ENCODE measurements at regions of chr2 and their contacts with region 1.

Region 1: DNA sequence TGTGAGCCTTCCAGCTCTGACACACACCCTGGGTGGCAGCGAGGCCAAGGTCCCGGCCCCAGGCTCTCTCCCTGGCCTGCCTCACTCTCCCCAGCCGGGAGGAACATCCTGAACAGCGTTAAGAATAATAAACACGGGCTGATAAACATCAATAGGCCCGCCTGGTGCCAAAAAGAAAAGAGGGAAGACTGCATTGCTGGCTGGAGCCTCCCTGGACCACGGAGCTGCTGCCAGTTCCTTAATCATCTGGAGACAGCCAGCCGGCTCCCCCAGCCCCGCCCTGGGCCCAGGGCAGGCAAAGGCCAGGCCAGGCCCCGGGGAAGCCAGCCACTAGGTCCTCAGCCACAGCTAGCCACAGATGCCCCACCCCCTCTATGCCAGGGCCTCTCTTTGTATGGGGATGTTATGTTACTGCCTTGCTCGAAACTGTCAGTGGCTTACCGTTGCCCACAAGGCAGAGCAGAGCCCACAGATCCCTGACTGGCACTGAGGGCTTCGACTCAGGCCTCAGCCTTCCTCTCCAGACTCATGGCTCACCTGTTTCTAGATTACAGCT is 293.7 kb downstream of the DYSF start:
- DNase-seq: peak in 2 of 5 donors; percentile 47 to 70
- ATAC-seq: peak in 2 of 4 donors; percentile 25 to 41
- H3K4me3 ChIP-seq: no peak overlapping the region
- H3K27ac ChIP-seq: peak overlapping the region in 4 of 12 donors; percentile 10 to 73 (median 32)
- H3K4me1 ChIP-seq: peaks cover 0 to 42% (median 27%) of the 10 kb centered on the region in 12 donors
- H3K27me3 ChIP-seq: no peaks in the 10 kb centered on the region
- CTCF ChIP-seq: no peak
- POLR2A ChIP-seq: no peak

Region 2: GRCh38 chr2:71711133-71711855 is 35.7 kb before region 1 on chr2:
- intact Hi-C with region 1: loop called in 1 of 10 experiments (anchors 5 kb)
- DNase-seq: peak in 1 of 5 donors; percentile 31
- ATAC-seq: no peak
- H3K4me3 ChIP-seq: no peak overlapping the region
- H3K27ac ChIP-seq: no peak overlapping the region
- H3K4me1 ChIP-seq: peaks cover 0 to 47% (median 17%) of the 10 kb centered on the region in 12 donors
- H3K27me3 ChIP-seq: no peaks in the 10 kb centered on the region
- CTCF ChIP-seq: no peak
- POLR2A ChIP-seq: no peak

Region 3: GRCh38 chr2:71716781-71717624 is 30.0 kb before region 1 on chr2:
- intact Hi-C with region 1: loop called in 1 of 10 experiments (anchors 1 kb)
- DNase-seq: peak; percentile 94 to 97 (median 95)
- ATAC-seq: peak; percentile 94 to 97 (median 96)
- H3K4me3 ChIP-seq: peak overlapping the region in 1 of 12 donors; percentile 7
- H3K27ac ChIP-seq: peak overlapping the region in 10 of 12 donors; percentile 38 to 89 (median 74)
- H3K4me1 ChIP-seq: peaks cover 0 to 84% (median 44%) of the 10 kb centered on the region in 12 donors
- H3K27me3 ChIP-seq: no peaks in the 10 kb centered on the region
- CTCF ChIP-seq: no peak
- POLR2A ChIP-seq: no peak

Measured in heart left ventricle (tissue), 16 donors.